Naive thymus-derived CD4-positive, alpha-beta T cell (primary cell): ENCODE measurements at regions of chrX and their contacts with region 1.

Region 1: DNA sequence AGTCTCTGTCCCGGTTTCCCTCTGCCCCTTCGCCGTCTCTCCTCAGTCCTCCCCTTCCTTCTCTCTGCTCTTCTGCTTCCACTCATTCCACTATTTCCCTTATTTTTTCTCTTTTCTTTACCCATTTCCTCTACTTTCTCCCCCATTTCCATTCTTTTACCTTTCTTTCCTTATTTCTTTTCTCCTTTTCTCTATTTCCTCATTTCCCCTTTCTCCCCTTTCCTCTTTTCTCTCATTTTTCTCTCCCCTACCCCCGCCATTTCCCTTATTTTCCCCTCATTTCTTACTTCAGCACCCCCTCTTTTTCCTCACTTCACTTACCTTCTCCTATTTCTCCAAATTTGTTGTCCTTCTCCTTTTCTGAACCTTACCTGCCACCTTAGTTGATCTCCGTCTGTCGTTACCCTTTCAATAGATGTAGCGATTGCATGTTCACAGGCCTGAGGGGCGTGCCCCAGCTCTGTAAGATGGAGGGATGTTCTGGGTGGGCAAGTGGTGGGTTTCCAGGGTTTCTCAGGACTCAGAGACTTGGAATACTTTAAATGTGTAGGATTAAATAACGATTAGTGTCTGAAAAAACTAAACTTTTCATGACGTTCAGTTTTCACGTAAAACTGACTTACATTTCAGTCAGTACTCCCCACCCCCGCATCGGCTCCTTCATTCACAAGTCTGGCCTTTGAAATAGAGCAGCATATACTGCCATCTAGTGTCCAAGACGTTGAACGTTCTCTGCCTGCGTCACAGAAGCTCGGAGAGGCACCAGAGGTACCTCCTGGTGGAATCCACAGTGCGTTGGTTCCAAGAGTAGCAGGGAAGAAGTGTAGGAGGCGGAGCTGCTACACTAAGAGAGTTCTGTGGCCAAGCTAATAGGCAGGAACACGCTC is 641 bp upstream of the NCBP2L start:
- DNase-seq: peak; percentile 13 to 87 (median 81)
- ATAC-seq: peak; percentile 91
- H3K4me3 ChIP-seq: peak overlapping the region; percentile 63
- H3K4me3 Mint-ChIP-seq: peak overlapping the region; percentile 80 to 96 (median 92)
- H3K27ac ChIP-seq: peak overlapping the region; percentile 64
- H3K27ac Mint-ChIP-seq: peak overlapping the region; percentile 82 to 95 (median 92)
- H3K4me1 ChIP-seq: no peaks in the 10 kb centered on the region
- H3K4me1 Mint-ChIP-seq: peaks cover 8 to 31% (median 19%) of the 10 kb centered on the region in 7 donors
- H3K27me3 ChIP-seq: no peaks in the 10 kb centered on the region
- H3K27me3 Mint-ChIP-seq: peaks cover 0 to 22% (median 0%) of the 10 kb centered on the region in 5 donors

Region 2: GRCh38 chrX:106999002-106999975 is 777.6 kb before region 1 on chrX:
- CTCF ChIA-PET with region 1: interaction called, 3 read pairs
- POLR2A ChIA-PET with region 1: no interaction called
- intact Hi-C with region 1: loop called in 1 of 2 experiments (anchors 1 kb)
- DNase-seq: peak; percentile 6 to 63 (median 49)
- ATAC-seq: peak; percentile 72
- H3K4me3 ChIP-seq: peak overlapping the region; percentile 53
- H3K4me3 Mint-ChIP-seq: peak overlapping the region; percentile 75 to 94 (median 86)
- H3K27ac ChIP-seq: peak overlapping the region; percentile 41
- H3K27ac Mint-ChIP-seq: peak overlapping the region in 8 of 9 donors; percentile 57 to 87 (median 71)
- H3K4me1 ChIP-seq: peaks cover 0 to 5% of the 10 kb centered on the region in 2 donors
- H3K4me1 Mint-ChIP-seq: peaks cover 5 to 13% (median 12%) of the 10 kb centered on the region in 7 donors
- H3K27me3 ChIP-seq: no peaks in the 10 kb centered on the region
- H3K27me3 Mint-ChIP-seq: peaks cover 0 to 2% (median 0%) of the 10 kb centered on the region in 5 donors

Region 3: GRCh38 chrX:107537815-107538214 is 239.1 kb before region 1 on chrX:
- CTCF ChIA-PET with region 1: interaction called, 3 read pairs
- POLR2A ChIA-PET with region 1: no interaction called
- intact Hi-C with region 1: loop called in 1 of 2 experiments (anchors 2 kb)
- DNase-seq: peak in 7 of 9 donors; percentile 17 to 43 (median 29)
- ATAC-seq: peak; percentile 57
- H3K4me3 ChIP-seq: no peak overlapping the region
- H3K4me3 Mint-ChIP-seq: no peak overlapping the region
- H3K27ac ChIP-seq: no peak overlapping the region
- H3K27ac Mint-ChIP-seq: no peak overlapping the region
- H3K4me1 ChIP-seq: no peaks in the 10 kb centered on the region
- H3K4me1 Mint-ChIP-seq: peaks cover 0 to 4% (median 0%) of the 10 kb centered on the region in 7 donors
- H3K27me3 ChIP-seq: no peaks in the 10 kb centered on the region
- H3K27me3 Mint-ChIP-seq: peaks cover 0 to 12% (median 6%) of the 10 kb centered on the region in 5 donors

Region 4: GRCh38 chrX:107589243-107589642 is 187.6 kb before region 1 on chrX:
- CTCF ChIA-PET with region 1: no interaction called
- POLR2A ChIA-PET with region 1: no interaction called
- intact Hi-C with region 1: no loop called
- DNase-seq: no peak
- ATAC-seq: no peak
- H3K4me3 ChIP-seq: no peak overlapping the region
- H3K4me3 Mint-ChIP-seq: no peak overlapping the region
- H3K27ac ChIP-seq: no peak overlapping the region
- H3K27ac Mint-ChIP-seq: no peak overlapping the region
- H3K4me1 ChIP-seq: no peaks in the 10 kb centered on the region
- H3K4me1 Mint-ChIP-seq: no peaks in the 10 kb centered on the region
- H3K27me3 ChIP-seq: no peaks in the 10 kb centered on the region
- H3K27me3 Mint-ChIP-seq: peaks cover 0 to 14% (median 0%) of the 10 kb centered on the region in 5 donors

Region 5: GRCh38 chrX:107716816-107717700 is 59.8 kb before region 1 on chrX:
- CTCF ChIA-PET with region 1: interaction called, 62 read pairs
- POLR2A ChIA-PET with region 1: interaction called, 71 read pairs
- intact Hi-C with region 1: loop called (anchors 1 kb)
- DNase-seq: peak; percentile 77 to 96 (median 91)
- ATAC-seq: peak; percentile 68
- H3K4me3 ChIP-seq: peak overlapping the region; percentile 97
- H3K4me3 Mint-ChIP-seq: peak overlapping the region; percentile 87 to 96 (median 92)
- H3K27ac ChIP-seq: peak overlapping the region; percentile 100
- H3K27ac Mint-ChIP-seq: peak overlapping the region; percentile 94 to 100 (median 98)
- H3K4me1 ChIP-seq: peaks cover 33 to 41% of the 10 kb centered on the region in 2 donors
- H3K4me1 Mint-ChIP-seq: peaks cover 12 to 71% (median 54%) of the 10 kb centered on the region in 7 donors
- H3K27me3 ChIP-seq: no peaks in the 10 kb centered on the region
- H3K27me3 Mint-ChIP-seq: no peaks in the 10 kb centered on the region

Region 6: DNA sequence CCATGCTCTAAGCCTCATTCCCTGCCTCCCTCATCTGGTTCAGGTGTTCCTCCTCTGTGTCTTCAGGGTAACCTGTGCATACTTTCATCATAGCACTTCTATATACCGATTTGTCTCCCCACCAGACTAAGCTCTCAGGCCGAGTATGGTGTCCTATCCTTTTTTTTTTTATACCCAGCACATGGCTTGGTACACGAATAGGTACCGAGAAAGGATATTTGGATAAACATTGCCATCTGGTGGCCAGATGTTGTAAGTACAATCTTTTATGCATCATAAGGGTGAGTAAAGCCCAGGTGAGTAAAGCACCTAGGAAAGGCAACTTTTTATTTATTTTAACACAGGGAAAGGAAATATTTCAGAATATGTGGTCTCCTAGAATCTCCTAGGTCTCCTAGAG is 117.1 kb after region 1 on chrX:
- CTCF ChIA-PET with region 1: no interaction called
- POLR2A ChIA-PET with region 1: no interaction called
- intact Hi-C with region 1: loop called (anchors 1 to 5 kb)
- DNase-seq: peak in 7 of 9 donors; percentile 30 to 68 (median 61)
- ATAC-seq: peak; percentile 72
- H3K4me3 ChIP-seq: no peak overlapping the region
- H3K4me3 Mint-ChIP-seq: no peak overlapping the region
- H3K27ac ChIP-seq: no peak overlapping the region
- H3K27ac Mint-ChIP-seq: peak overlapping the region in 3 of 9 donors; percentile 20 to 90 (median 52)
- H3K4me1 ChIP-seq: no peaks in the 10 kb centered on the region
- H3K4me1 Mint-ChIP-seq: peaks cover 0 to 8% (median 0%) of the 10 kb centered on the region in 7 donors
- H3K27me3 ChIP-seq: no peaks in the 10 kb centered on the region
- H3K27me3 Mint-ChIP-seq: no peaks in the 10 kb centered on the region